GM13977 (cell line): ENCODE measurements at regions of chr19 and their contacts with region 1.

Region 1: DNA sequence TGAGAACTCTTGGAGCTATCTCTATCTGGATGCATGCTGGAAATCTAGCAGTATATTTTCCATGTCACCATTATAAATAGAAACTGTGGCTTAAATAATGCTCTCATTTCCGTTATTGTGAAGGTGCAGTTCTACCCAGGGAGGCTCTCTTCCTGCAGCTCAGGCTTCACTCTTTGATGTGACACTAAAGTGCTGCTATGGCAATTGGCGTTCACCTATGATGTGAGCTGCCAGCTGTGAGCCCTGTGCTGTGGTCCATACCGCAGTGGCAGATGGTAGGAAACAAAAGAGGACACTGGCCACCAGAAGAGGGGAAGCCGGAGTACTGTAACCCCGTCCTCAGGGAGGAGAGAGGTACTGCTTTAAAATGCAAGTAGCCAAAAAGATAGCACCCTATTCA is 40.6 kb upstream of the ZNF681 start:
- DNase-seq: no peak
- CTCF ChIP-seq: no peak

Region 2: DNA sequence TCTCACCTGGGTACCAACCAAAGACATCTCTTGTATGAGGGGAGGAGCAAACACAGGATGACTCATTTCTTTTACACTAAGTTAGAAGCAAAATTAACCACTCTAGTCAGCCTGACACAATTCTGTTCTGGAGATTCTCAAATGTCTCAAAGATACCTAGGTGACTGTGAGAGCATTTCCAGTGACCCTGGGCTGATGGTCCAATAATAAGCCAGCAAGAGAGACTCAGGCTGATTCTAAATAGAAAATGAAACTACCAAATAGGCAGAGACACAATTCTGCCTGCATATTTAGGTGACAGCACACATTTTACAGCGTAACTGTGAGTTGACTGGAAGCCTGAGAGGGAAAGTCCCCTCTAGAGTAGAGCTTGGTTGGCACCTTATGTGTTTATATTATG is 420.4 kb before region 1 on chr19:
- in situ Hi-C with region 1: loop called (anchors 5 kb)
- DNase-seq: no peak
- CTCF ChIP-seq: no peak